Activated naive CD8-positive, alpha-beta T cell treated with anti-CD3 and anti-CD28 coated beads, Interleukin-2, amount 10 ng/mL, durations not matched to agents 7 days and 5 days (primary cell): ENCODE measurements at regions of chr19 and their contacts with region 1.

Region 1: GRCh38 chr19:6668691-6669090 is 1.3 kb downstream of the TNFSF14 start:
- DNase-seq: no peak
- ATAC-seq: no peak
- H3K4me3 Mint-ChIP-seq: peak overlapping the region; percentile 92
- H3K27ac Mint-ChIP-seq: peak overlapping the region; percentile 94
- H3K4me1 Mint-ChIP-seq: peaks cover 22% of the 10 kb centered on the region
- H3K27me3 Mint-ChIP-seq: no peaks in the 10 kb centered on the region

Region 2: DNA sequence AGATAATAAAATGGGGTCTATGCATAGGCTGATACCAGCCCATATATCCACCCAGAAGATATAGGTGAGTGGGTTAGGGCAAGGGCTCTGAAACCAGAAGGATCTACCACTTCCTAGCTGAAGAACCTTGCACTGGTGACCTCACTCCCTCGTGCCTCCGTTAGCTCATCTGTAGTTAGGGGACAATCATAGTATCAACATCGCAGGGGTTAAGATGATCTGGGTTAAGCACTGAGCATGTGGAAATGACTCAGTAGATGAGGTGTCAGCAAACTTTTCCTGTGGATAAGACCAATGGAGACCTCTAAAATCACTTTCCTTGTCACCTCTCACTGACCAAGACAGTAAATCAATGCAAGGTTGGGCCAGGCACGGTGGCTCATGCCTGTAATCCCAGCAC is 29.3 kb before region 1 on chr19:
- POLR2A ChIA-PET with region 1: interaction called, 15 read pairs
- DNase-seq: no peak
- ATAC-seq: peak; percentile 59
- H3K4me3 Mint-ChIP-seq: peak overlapping the region; percentile 43
- H3K27ac Mint-ChIP-seq: peak overlapping the region; percentile 90
- H3K4me1 Mint-ChIP-seq: peaks cover 40% of the 10 kb centered on the region
- H3K27me3 Mint-ChIP-seq: no peaks in the 10 kb centered on the region

Region 3: DNA sequence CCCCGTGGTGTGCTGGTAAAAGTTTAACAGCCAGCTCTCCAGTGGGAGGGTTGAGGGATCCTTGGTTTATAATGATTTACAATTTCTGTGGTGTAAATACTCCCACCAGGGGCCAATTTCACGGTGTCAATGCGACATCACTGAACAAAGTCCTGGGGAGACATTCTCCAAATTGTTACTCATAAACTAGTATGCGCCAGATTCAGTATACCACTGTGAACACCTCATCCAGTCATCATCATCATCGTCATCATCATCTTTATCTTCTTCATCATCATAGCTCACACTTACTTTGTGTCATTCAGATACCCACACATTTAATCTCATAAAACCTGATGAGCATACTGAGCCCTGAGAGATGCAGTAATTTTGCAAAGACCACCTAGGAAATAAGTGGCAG is 18.4 kb after region 1 on chr19:
- POLR2A ChIA-PET with region 1: no interaction called
- DNase-seq: no peak
- ATAC-seq: no peak
- H3K4me3 Mint-ChIP-seq: no peak overlapping the region
- H3K27ac Mint-ChIP-seq: no peak overlapping the region
- H3K4me1 Mint-ChIP-seq: peaks cover 6% of the 10 kb centered on the region
- H3K27me3 Mint-ChIP-seq: peaks cover 2% of the 10 kb centered on the region